BJ (cell line): ENCODE measurements at regions of chr1 and their contacts with region 1.

Region 1: DNA sequence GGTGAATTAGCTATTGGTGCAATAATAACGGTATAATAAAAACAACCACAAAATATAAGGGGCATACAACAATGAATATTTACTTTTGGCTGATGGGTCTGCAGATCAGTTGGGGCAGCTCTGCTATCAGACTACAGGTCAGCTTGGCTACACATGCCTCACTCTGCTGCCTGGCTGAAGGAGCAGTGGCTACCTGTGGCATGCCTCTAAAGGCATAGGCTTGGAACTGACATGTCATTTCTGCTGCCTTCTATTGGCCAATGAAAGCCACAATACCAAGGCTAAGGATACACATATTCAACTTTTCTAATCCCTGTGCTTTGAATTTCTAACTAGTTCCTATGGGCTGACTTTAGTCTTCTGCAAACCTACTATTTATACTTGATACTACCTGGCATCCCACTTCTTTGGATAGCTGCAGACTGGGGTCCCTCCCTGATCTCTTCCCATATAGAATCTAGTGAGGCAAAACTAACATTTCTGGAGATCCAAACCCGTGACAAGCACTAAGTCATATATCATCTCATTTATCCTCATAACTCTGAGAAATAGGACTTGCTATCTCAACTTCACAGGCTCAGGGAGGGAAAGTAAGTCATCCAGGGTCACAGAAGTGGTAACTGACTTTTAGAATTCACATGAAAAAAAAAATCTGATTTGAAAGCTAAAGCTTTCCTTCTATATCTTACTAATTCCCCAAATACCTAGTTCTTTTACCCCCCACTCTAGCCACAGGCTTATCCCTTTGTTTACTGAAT is 19.2 kb upstream of the SYDE2 start:
- DNase-seq: no peak
- H3K4me3 ChIP-seq: no peak overlapping the region
- H3K27me3 ChIP-seq: no peaks in the 10 kb centered on the region
- CTCF ChIP-seq: no peak

Region 2: GRCh38 chr1:84735483-84735882 is 484.5 kb before region 1 on chr1:
- CTCF ChIA-PET with region 1: no interaction called
- POLR2A ChIA-PET with region 1: interaction called, 10 read pairs
- DNase-seq: no peak
- H3K4me3 ChIP-seq: no peak overlapping the region
- H3K27me3 ChIP-seq: no peaks in the 10 kb centered on the region
- CTCF ChIP-seq: no peak

Region 3: DNA sequence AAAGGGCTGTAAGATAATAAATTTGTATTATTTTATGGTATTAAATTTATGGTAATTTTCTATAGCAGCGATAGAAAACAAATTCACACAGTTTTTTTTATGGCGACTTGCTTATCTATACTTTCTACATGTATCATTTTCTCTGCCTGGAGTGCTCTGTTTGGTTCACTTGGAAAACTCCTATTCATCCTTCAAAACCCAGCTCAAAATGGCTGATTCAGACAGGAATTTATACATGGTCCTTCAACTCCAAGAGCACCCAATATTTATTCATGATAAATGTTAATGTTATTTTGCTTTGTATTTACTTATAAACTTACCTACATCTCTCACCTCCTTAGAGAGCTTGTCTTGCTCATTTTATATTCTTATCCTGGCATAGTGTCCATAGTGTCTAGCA is 474.2 kb before region 1 on chr1:
- CTCF ChIA-PET with region 1: no interaction called
- POLR2A ChIA-PET with region 1: no interaction called
- DNase-seq: no peak
- H3K4me3 ChIP-seq: no peak overlapping the region
- H3K27me3 ChIP-seq: no peaks in the 10 kb centered on the region
- CTCF ChIP-seq: no peak

Region 4: GRCh38 chr1:85199667-85200361 is 20.2 kb before region 1 on chr1:
- CTCF ChIA-PET with region 1: no interaction called
- POLR2A ChIA-PET with region 1: no interaction called
- DNase-seq: no peak
- H3K4me3 ChIP-seq: peak overlapping the region; percentile 64
- H3K27me3 ChIP-seq: no peaks in the 10 kb centered on the region
- CTCF ChIP-seq: no peak